ENCODE measurements at regions of chr2 and their contacts with region 1.

Region 1: DNA sequence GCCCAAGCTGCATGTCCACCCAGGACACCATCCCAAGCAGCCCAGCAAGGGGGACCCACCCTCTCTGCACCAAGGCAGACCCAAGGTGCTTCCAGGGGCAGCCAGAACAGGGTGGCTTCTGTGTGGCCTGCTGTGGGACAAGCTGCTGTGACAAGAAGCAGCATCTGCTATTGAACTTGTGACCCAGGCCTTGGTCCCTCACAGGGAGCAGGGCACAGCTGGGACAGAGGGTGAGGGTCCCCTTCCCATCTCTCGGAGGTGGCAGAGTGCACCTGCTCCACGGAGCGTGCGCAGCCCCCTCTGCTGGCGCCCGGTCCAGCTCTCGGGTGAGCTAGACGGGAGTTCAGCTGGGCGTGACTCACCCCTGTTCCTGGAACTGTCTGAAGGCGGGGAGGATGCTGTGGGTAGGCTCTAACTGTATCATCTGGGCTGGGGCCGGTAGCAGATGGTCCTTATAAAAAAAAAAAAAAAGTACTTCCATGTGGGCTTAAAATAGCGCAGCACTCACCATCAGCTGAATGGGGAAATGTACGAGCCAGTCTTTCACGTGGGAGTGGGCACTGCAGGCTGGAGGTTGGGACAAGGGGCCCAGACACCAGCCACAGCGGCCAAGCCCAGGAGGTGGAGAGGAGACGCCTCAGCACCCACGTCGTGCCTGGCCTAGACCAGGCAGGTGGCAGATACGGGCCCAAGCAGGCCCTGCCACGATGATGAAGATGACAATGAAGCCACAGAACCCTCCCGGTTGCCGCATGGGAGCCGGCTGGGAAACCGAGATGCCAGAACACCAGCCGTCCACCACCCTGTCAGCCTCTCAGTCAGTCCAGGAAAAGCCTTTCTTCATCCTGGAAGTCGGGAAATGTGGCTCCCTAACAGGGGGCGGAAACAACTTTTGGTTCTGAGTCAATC is 136.8 kb upstream of the ID2 start:
- DNase-seq: peak in 8 of 9 donors; percentile 10 to 85 (median 32)
- ATAC-seq: peak; percentile 82
- H3K4me3 ChIP-seq: peak overlapping the region; percentile 17
- H3K4me3 Mint-ChIP-seq: peak overlapping the region in 7 of 10 donors; percentile 2 to 64 (median 23)
- H3K27ac ChIP-seq: no peak overlapping the region
- H3K27ac Mint-ChIP-seq: peak overlapping the region in 4 of 9 donors; percentile 43 to 97 (median 60)
- H3K4me1 ChIP-seq: peaks cover 10 to 57% of the 10 kb centered on the region in 2 donors
- H3K4me1 Mint-ChIP-seq: peaks cover 32 to 84% (median 42%) of the 10 kb centered on the region in 7 donors
- H3K27me3 ChIP-seq: no peaks in the 10 kb centered on the region
- H3K27me3 Mint-ChIP-seq: no peaks in the 10 kb centered on the region

Region 2: GRCh38 chr2:7203055-7203467 is 1342.0 kb before region 1 on chr2:
- CTCF ChIA-PET with region 1: no interaction called
- POLR2A ChIA-PET with region 1: no interaction called
- intact Hi-C with region 1: loop called in 1 of 2 experiments (anchors 2 kb)
- DNase-seq: peak; percentile 31 to 65 (median 55)
- ATAC-seq: peak; percentile 81
- H3K4me3 ChIP-seq: no peak overlapping the region
- H3K4me3 Mint-ChIP-seq: no peak overlapping the region
- H3K27ac ChIP-seq: no peak overlapping the region
- H3K27ac Mint-ChIP-seq: no peak overlapping the region
- H3K4me1 ChIP-seq: no peaks in the 10 kb centered on the region
- H3K4me1 Mint-ChIP-seq: peaks cover 0 to 6% (median 0%) of the 10 kb centered on the region in 7 donors
- H3K27me3 ChIP-seq: no peaks in the 10 kb centered on the region
- H3K27me3 Mint-ChIP-seq: no peaks in the 10 kb centered on the region

Region 3: DNA sequence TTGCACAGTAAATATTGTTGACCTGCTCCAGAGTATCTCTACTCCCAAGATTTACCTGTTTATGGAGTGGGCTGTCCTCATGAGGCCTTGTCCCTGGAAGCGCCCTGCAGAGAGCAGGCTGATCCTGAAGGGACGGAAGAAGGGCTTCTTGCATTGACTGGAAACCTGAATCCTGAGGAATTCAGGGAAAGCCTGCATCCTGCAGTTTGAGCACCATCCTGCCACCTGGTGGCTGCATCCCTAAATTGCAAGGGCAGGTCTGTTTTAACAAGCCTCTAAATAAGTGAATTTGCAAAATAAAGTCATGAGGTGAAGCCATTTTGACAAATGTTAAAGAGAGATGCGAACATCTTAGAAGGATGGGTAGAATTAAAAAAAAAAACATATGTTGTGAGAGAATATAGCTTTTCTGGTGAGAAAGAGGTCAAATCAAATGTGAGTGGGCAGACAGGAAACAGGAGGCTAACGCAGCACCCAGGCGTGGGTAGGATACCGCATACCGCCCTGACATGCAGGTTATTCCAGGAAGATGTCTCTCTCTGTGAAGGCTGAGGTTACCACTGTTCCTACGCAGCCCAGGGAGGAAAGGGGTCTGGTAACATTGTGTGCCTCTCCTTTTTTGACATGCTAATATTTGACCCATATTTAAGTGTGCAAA is 872.9 kb before region 1 on chr2:
- CTCF ChIA-PET with region 1: no interaction called
- POLR2A ChIA-PET with region 1: no interaction called
- intact Hi-C with region 1: loop called in 1 of 2 experiments (anchors 10 kb)
- DNase-seq: peak in 8 of 9 donors; percentile 17 to 69 (median 47)
- ATAC-seq: peak; percentile 61
- H3K4me3 ChIP-seq: no peak overlapping the region
- H3K4me3 Mint-ChIP-seq: peak overlapping the region; percentile 16 to 84 (median 69)
- H3K27ac ChIP-seq: no peak overlapping the region
- H3K27ac Mint-ChIP-seq: peak overlapping the region; percentile 77 to 91 (median 87)
- H3K4me1 ChIP-seq: peaks cover 9 to 19% of the 10 kb centered on the region in 2 donors
- H3K4me1 Mint-ChIP-seq: peaks cover 24 to 59% (median 40%) of the 10 kb centered on the region in 7 donors
- H3K27me3 ChIP-seq: no peaks in the 10 kb centered on the region
- H3K27me3 Mint-ChIP-seq: no peaks in the 10 kb centered on the region

Region 4: DNA sequence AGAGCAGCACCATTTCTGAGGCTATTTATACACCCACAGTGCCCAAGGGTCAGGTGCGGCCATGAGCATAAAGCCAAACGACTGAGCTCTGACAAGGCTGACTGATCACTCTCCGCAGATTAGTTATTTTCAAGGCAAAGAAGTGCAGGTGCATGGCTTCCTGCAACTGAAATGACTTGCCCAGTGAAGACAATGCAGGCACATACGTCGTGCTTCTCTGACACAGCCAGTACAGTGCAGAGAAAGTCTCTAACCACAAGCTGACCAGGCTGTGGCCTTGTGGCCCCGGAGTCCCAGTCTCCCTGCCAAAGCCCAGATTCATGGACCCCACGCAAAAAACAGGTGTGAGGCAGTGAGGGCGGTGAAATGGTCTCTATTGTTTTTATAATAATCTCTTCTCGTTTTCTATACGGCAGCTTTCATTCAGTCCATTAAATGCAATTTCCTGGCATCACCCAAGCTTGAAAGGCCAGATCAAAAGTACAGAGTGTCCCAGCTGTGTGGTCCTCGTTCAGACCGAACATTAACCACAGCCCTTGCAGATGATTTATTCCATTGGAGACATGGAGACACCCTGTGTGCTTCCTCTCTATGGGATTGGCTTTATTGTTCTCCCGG is 310.2 kb before region 1 on chr2:
- CTCF ChIA-PET with region 1: no interaction called
- POLR2A ChIA-PET with region 1: no interaction called
- intact Hi-C with region 1: loop called in 1 of 2 experiments (anchors 5 kb)
- DNase-seq: no peak
- ATAC-seq: no peak
- H3K4me3 ChIP-seq: no peak overlapping the region
- H3K4me3 Mint-ChIP-seq: peak overlapping the region in 5 of 10 donors; percentile 17 to 47 (median 29)
- H3K27ac ChIP-seq: no peak overlapping the region
- H3K27ac Mint-ChIP-seq: no peak overlapping the region
- H3K4me1 ChIP-seq: peaks cover 0 to 2% of the 10 kb centered on the region in 2 donors
- H3K4me1 Mint-ChIP-seq: peaks cover 2 to 36% (median 10%) of the 10 kb centered on the region in 7 donors
- H3K27me3 ChIP-seq: no peaks in the 10 kb centered on the region
- H3K27me3 Mint-ChIP-seq: peaks cover 4 to 24% (median 9%) of the 10 kb centered on the region in 5 donors

Region 5: GRCh38 chr2:8456151-8456845 is 88.7 kb before region 1 on chr2:
- CTCF ChIA-PET with region 1: no interaction called
- POLR2A ChIA-PET with region 1: no interaction called
- intact Hi-C with region 1: loop called in 1 of 2 experiments (anchors 1 kb)
- DNase-seq: peak in 8 of 9 donors; percentile 44 to 71 (median 58)
- ATAC-seq: peak; percentile 75
- H3K4me3 ChIP-seq: peak overlapping the region; percentile 60
- H3K4me3 Mint-ChIP-seq: peak overlapping the region; percentile 68 to 88 (median 84)
- H3K27ac ChIP-seq: no peak overlapping the region
- H3K27ac Mint-ChIP-seq: peak overlapping the region in 8 of 9 donors; percentile 2 to 94 (median 54)
- H3K4me1 ChIP-seq: peaks cover 11 to 21% of the 10 kb centered on the region in 2 donors
- H3K4me1 Mint-ChIP-seq: peaks cover 13 to 45% (median 25%) of the 10 kb centered on the region in 7 donors
- H3K27me3 ChIP-seq: no peaks in the 10 kb centered on the region
- H3K27me3 Mint-ChIP-seq: peaks cover 0 to 17% (median 6%) of the 10 kb centered on the region in 5 donors

Region 6: GRCh38 chr2:8477552-8478470 is 67.2 kb before region 1 on chr2:
- CTCF ChIA-PET with region 1: no interaction called
- POLR2A ChIA-PET with region 1: no interaction called
- intact Hi-C with region 1: loop called in 1 of 2 experiments (anchors 2 kb)
- DNase-seq: peak in 2 of 9 donors; percentile 19
- ATAC-seq: peak; percentile 66
- H3K4me3 ChIP-seq: peak overlapping the region; percentile 15
- H3K4me3 Mint-ChIP-seq: peak overlapping the region; percentile 26 to 72 (median 53)
- H3K27ac ChIP-seq: no peak overlapping the region
- H3K27ac Mint-ChIP-seq: peak overlapping the region in 7 of 9 donors; percentile 5 to 75 (median 20)
- H3K4me1 ChIP-seq: peaks cover 5 to 57% of the 10 kb centered on the region in 2 donors
- H3K4me1 Mint-ChIP-seq: peaks cover 38 to 92% (median 53%) of the 10 kb centered on the region in 7 donors
- H3K27me3 ChIP-seq: no peaks in the 10 kb centered on the region
- H3K27me3 Mint-ChIP-seq: no peaks in the 10 kb centered on the region

Region 7: GRCh38 chr2:8524388-8524787 is 20.7 kb before region 1 on chr2:
- CTCF ChIA-PET with region 1: no interaction called
- POLR2A ChIA-PET with region 1: no interaction called
- intact Hi-C with region 1: loop called in 1 of 2 experiments (anchors 1 kb)
- DNase-seq: no peak
- ATAC-seq: no peak
- H3K4me3 ChIP-seq: no peak overlapping the region
- H3K4me3 Mint-ChIP-seq: no peak overlapping the region
- H3K27ac ChIP-seq: no peak overlapping the region
- H3K27ac Mint-ChIP-seq: no peak overlapping the region
- H3K4me1 ChIP-seq: peaks cover 8 to 47% of the 10 kb centered on the region in 2 donors
- H3K4me1 Mint-ChIP-seq: peaks cover 6 to 66% (median 13%) of the 10 kb centered on the region in 7 donors
- H3K27me3 ChIP-seq: no peaks in the 10 kb centered on the region
- H3K27me3 Mint-ChIP-seq: no peaks in the 10 kb centered on the region